ENCODE measurements at regions of chr1 and their contacts with region 1.

Region 1: GRCh38 chr1:113835642-113836307 is 23.5 kb upstream of the RSBN1 start:
- DNase-seq: peak in 7 of 9 donors; percentile 26 to 61 (median 51)
- ATAC-seq: peak; percentile 66
- H3K4me3 ChIP-seq: no peak overlapping the region
- H3K4me3 Mint-ChIP-seq: no peak overlapping the region
- H3K27ac ChIP-seq: no peak overlapping the region
- H3K27ac Mint-ChIP-seq: peak overlapping the region in 2 of 9 donors; percentile 14 to 47
- H3K4me1 ChIP-seq: no peaks in the 10 kb centered on the region
- H3K4me1 Mint-ChIP-seq: peaks cover 4 to 10% (median 8%) of the 10 kb centered on the region in 7 donors
- H3K27me3 ChIP-seq: no peaks in the 10 kb centered on the region
- H3K27me3 Mint-ChIP-seq: no peaks in the 10 kb centered on the region

Region 2: DNA sequence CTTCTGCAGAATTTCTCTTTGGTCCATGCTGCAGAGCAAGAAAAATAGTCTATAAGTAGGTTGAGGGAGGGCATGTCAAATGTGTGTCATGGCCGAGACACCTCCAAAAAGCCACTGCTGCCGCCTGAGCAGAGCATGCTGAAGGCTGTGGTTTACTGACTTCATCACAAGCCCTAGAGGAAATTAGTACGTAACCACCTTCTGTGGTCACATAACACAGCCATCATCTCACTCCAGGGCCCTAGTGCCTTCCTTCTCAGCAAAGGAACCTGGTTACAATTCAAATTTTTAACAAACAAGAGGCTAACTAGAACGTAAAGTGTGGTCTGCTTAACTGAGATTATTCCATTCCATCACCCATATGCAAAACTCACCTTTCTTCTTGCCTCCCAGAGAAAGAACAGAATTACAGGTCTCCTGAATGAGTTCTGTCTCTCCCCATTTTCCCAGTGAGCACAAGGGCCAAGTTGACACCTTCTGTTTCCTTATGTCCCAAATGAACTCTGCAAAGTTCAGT is 35.9 kb after region 1 on chr1 and contains the start of gene PTPN22:
- CTCF ChIA-PET with region 1: interaction called, 4 read pairs
- POLR2A ChIA-PET with region 1: interaction called, 3 read pairs
- intact Hi-C with region 1: loop called (anchors 1 to 2 kb)
- DNase-seq: peak; percentile 41 to 91 (median 87)
- ATAC-seq: peak; percentile 98
- H3K4me3 ChIP-seq: peak within 1 kb of the TSS; percentile 81
- H3K4me3 Mint-ChIP-seq: peak within 1 kb of the TSS; percentile 82 to 95 (median 92)
- H3K27ac ChIP-seq: peak within 1 kb of the TSS; percentile 87
- H3K27ac Mint-ChIP-seq: peak within 1 kb of the TSS; percentile 94 to 99 (median 98)
- H3K4me1 ChIP-seq: peaks cover 30 to 65% of the 10 kb centered on the region in 2 donors
- H3K4me1 Mint-ChIP-seq: peaks cover 37 to 77% (median 72%) of the 10 kb centered on the region in 7 donors
- H3K27me3 ChIP-seq: no peaks in the 10 kb centered on the region
- H3K27me3 Mint-ChIP-seq: no peaks in the 10 kb centered on the region
- total RNA-seq, gene PTPN22: 22.2 to 76.7 (median 27.5) TPM

Region 3: DNA sequence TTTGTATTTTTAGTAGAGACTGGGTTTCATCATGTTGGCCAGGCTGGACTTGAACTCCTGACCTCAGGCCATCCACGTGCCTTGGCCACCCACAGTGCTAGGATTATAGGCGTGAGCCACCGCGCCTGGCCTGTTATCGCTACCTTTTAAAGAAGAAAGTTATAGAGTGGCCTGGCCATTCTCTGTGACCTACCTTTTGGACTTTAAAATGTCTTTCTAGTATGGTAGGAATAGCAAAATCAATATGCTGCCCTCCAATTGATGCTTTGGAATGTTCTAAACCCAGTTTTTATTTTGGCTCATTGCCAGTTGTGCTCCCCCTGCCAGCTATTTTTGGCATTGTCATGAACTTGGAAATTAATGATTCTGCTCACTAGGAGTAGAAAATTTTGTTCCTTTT is 113.2 kb after region 1 on chr1:
- CTCF ChIA-PET with region 1: interaction called, 4 read pairs
- POLR2A ChIA-PET with region 1: interaction called, 5 read pairs
- intact Hi-C with region 1: loop called (anchors 5 kb)
- DNase-seq: peak in 5 of 9 donors; percentile 16 to 53 (median 41)
- ATAC-seq: no peak
- H3K4me3 ChIP-seq: no peak overlapping the region
- H3K4me3 Mint-ChIP-seq: peak overlapping the region in 9 of 10 donors; percentile 36 to 88 (median 72)
- H3K27ac ChIP-seq: peak overlapping the region; percentile 73
- H3K27ac Mint-ChIP-seq: peak overlapping the region in 8 of 9 donors; percentile 92 to 99 (median 97)
- H3K4me1 ChIP-seq: peaks cover 42 to 68% of the 10 kb centered on the region in 2 donors
- H3K4me1 Mint-ChIP-seq: peaks cover 33 to 95% (median 85%) of the 10 kb centered on the region in 7 donors
- H3K27me3 ChIP-seq: no peaks in the 10 kb centered on the region
- H3K27me3 Mint-ChIP-seq: no peaks in the 10 kb centered on the region

Region 4: DNA sequence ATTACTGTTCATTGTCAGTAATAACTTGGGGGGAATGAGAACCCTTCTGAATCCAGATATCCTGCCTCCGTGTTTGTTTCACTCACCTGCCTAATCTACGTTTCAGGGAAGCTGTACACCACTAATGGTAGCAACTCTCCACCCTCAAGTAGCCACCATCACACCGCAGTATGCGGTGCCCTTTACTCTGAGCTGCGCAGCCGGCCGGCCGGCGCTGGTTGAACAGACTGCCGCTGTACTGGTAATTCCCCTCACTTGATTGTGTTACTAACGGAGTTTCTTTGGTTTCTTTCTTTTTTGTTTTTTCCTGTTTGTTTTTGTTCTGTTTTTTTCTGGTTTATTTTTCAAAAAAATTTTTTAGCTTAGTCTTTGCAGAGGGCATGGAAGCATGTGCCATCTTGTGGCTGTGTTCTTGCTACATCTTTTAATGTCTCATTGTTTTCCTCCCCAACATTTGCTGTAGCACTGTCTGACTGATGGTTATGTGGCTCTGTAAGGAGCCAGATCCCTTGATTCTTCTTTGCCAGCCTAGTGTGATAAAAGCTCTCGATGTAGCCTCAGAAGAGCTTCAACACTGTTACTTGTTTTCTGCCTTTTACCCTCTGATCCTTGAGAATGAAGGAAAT is 127.6 kb after region 1 on chr1:
- CTCF ChIA-PET with region 1: interaction called, 5 read pairs
- POLR2A ChIA-PET with region 1: interaction called, 3 read pairs
- intact Hi-C with region 1: loop called in 1 of 2 experiments (anchors 1 kb)
- DNase-seq: peak in 3 of 9 donors; percentile 25 to 46 (median 39)
- ATAC-seq: peak; percentile 68
- H3K4me3 ChIP-seq: no peak overlapping the region
- H3K4me3 Mint-ChIP-seq: no peak overlapping the region
- H3K27ac ChIP-seq: no peak overlapping the region
- H3K27ac Mint-ChIP-seq: peak overlapping the region in 8 of 9 donors; percentile 22 to 87 (median 76)
- H3K4me1 ChIP-seq: no peaks in the 10 kb centered on the region
- H3K4me1 Mint-ChIP-seq: peaks cover 4 to 35% (median 20%) of the 10 kb centered on the region in 7 donors
- H3K27me3 ChIP-seq: no peaks in the 10 kb centered on the region
- H3K27me3 Mint-ChIP-seq: no peaks in the 10 kb centered on the region

Region 5: GRCh38 chr1:113978863-113979702 is 143.3 kb after region 1 on chr1 and contains the start of gene OLFML3:
- CTCF ChIA-PET with region 1: no interaction called
- POLR2A ChIA-PET with region 1: no interaction called
- intact Hi-C with region 1: loop called in 1 of 2 experiments (anchors 1 kb)
- DNase-seq: peak in 5 of 9 donors; percentile 11 to 28 (median 17)
- ATAC-seq: peak; percentile 60
- H3K4me3 ChIP-seq: no peak within 1 kb of the TSS
- H3K4me3 Mint-ChIP-seq: no peak within 1 kb of the TSS
- H3K27ac ChIP-seq: no peak within 1 kb of the TSS
- H3K27ac Mint-ChIP-seq: peak within 1 kb of the TSS in 7 of 9 donors; percentile 31 to 48 (median 40)
- H3K4me1 ChIP-seq: peaks cover 0 to 11% of the 10 kb centered on the region in 2 donors
- H3K4me1 Mint-ChIP-seq: peaks cover 24 to 49% (median 35%) of the 10 kb centered on the region in 7 donors
- H3K27me3 ChIP-seq: no peaks in the 10 kb centered on the region
- H3K27me3 Mint-ChIP-seq: no peaks in the 10 kb centered on the region
- total RNA-seq, gene OLFML3: 0.24 to 1.8 (median 1.1) TPM

Region 6: GRCh38 chr1:114282751-114283403 is 447.1 kb after region 1 on chr1:
- CTCF ChIA-PET with region 1: interaction called, 4 read pairs
- POLR2A ChIA-PET with region 1: no interaction called
- intact Hi-C with region 1: loop called in 1 of 2 experiments (anchors 5 kb)
- DNase-seq: peak; percentile 65 to 84 (median 78)
- ATAC-seq: peak; percentile 99
- H3K4me3 ChIP-seq: no peak overlapping the region
- H3K4me3 Mint-ChIP-seq: no peak overlapping the region
- H3K27ac ChIP-seq: no peak overlapping the region
- H3K27ac Mint-ChIP-seq: no peak overlapping the region
- H3K4me1 ChIP-seq: no peaks in the 10 kb centered on the region
- H3K4me1 Mint-ChIP-seq: peaks cover 0 to 9% (median 0%) of the 10 kb centered on the region in 7 donors
- H3K27me3 ChIP-seq: no peaks in the 10 kb centered on the region
- H3K27me3 Mint-ChIP-seq: peaks cover 0 to 25% (median 0%) of the 10 kb centered on the region in 5 donors

Measured in naive thymus-derived CD4-positive, alpha-beta T cell (primary cell).